K562 (cell line): ENCODE measurements at regions of chr7 and their contacts with region 1.

Region 1: DNA sequence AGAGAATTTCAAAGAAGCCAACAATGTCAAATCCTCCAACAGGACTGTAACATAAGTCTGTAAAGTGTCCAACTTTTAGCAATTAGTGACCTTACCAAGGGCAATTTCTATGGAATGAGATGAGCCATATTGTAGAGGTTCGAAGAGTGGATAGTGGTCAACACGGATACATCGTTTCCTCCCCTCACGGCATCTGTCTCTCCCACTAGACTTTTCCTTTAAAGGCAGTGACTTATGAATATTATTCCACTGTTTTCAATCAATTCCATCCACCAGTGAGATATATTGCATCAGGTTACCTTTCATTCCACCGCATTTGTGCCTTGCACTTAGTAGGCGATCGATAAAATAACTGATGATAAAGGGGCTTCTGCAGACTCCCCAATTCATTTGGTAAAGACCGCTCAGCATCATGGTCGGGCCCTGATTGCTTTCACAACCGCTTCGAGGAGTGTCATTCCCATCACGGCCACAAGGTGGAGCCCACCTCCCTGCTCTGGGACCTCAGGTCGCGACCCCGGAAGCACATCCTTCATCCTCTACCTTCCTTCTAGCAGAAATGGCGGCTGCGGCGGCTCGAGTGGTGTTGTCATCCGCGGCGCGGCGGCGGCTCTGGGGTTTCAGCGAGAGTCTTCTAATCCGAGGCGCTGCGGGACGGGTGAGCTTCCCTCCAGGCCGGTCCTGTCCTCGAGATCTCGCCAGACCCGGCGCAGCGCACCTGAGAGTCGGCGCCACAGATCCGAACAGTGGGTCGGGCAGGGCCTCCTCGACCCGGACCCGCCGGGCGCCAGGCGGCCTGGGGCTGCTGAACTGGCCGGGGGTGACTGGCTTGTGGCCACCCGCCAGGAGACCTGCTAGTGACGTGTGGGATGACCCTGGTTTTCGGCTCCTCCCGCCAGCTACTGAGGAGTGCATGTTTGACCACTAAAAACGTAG is at the start of gene PMPCB:
- DNase-seq: peak; percentile 95 to 97 (median 96)
- ATAC-seq: peak; percentile 93
- H3K4me3 ChIP-seq: peak within 1 kb of the TSS; percentile 69
- H3K27ac ChIP-seq: peak within 1 kb of the TSS; percentile 80
- H3K4me1 ChIP-seq: peaks cover 3 to 6% of the 10 kb centered on the region in 2 experiments; a peak in 4 of 5 replicates
- H3K27me3 ChIP-seq: no peaks in the 10 kb centered on the region
- CTCF ChIP-seq: peak; percentile 92 to 98 (median 98)
- EP300 ChIP-seq: peak; percentile 19; the same call in 1 of the 2 replicates
- POLR2A ChIP-seq: peak; percentile 96
- RAD21 ChIP-seq: peak; percentile 88 to 91
- polyA plus RNA-seq, gene PMPCB: 169 to 209 TPM

Region 2: DNA sequence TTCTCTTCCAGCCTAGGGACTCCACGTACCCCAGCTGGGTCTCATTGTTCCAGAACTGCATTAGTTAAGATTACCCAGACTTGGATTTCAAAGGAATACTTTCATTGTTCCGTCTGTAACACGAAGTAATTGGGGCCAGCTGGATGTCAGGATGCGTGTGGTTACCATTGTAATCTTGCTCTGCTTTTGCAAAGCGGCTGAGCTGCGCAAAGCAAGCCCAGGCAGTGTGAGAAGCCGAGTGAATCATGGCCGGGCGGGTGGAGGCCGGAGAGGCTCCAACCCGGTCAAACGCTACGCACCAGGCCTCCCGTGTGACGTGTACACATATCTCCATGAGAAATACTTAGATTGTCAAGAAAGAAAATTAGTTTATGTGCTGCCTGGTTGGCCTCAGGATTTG is 363.4 kb before region 1 on chr7:
- CTCF ChIA-PET with region 1: no interaction called
- POLR2A ChIA-PET with region 1: no interaction called
- in situ Hi-C with region 1: no loop called
- intact Hi-C with region 1: no loop called
- DNase-seq: no peak
- ATAC-seq: no peak
- H3K4me3 ChIP-seq: no peak overlapping the region
- H3K27ac ChIP-seq: no peak overlapping the region
- H3K4me1 ChIP-seq: peaks cover 4 to 16% of the 10 kb centered on the region in 2 experiments
- H3K27me3 ChIP-seq: no peaks in the 10 kb centered on the region
- CTCF ChIP-seq: no peak
- EP300 ChIP-seq: no peak
- POLR2A ChIP-seq: no peak
- RAD21 ChIP-seq: no peak

Region 3: GRCh38 chr7:103344453-103345149 is 47.4 kb after region 1 on chr7 and contains the start of gene DNAJC2:
- CTCF ChIA-PET with region 1: interaction called, 3 read pairs
- POLR2A ChIA-PET with region 1: interaction called, 3 read pairs
- in situ Hi-C with region 1: no loop called
- intact Hi-C with region 1: loop called (anchors 5 kb)
- DNase-seq: peak; percentile 88 to 98 (median 92)
- ATAC-seq: peak; percentile 89
- H3K4me3 ChIP-seq: peak within 1 kb of the TSS; percentile 82
- H3K27ac ChIP-seq: peak within 1 kb of the TSS; percentile 93
- H3K4me1 ChIP-seq: peaks cover 7 to 11% of the 10 kb centered on the region in 2 experiments; a peak in 3 of 5 replicates
- H3K27me3 ChIP-seq: no peaks in the 10 kb centered on the region
- CTCF ChIP-seq: no peak
- EP300 ChIP-seq: peak; percentile 73
- POLR2A ChIP-seq: peak; percentile 95
- RAD21 ChIP-seq: no peak
- polyA plus RNA-seq, gene DNAJC2: 40.2 to 40.4 TPM

Region 4: DNA sequence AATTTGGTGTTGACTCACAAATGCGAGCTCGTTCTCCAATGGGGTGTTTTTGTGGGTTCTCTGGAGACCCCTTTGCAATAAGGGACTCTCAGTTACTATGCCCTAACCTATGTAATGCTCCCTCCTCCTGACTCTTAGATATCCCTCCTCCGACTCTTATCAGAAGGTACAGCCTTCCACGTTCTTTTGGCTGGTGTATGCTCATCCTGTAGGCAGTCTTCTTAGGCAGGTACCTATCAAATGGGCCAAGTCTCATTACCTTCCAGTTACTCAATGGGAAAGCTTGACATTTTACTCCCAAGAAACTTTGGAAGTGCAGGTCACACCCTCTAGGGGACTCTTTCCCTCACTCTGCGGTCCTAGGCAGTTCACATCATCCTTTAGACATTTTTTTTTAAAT is 116.2 kb after region 1 on chr7:
- CTCF ChIA-PET with region 1: no interaction called
- POLR2A ChIA-PET with region 1: interaction called, 3 read pairs
- in situ Hi-C with region 1: loop called (anchors 5 kb)
- intact Hi-C with region 1: no loop called
- DNase-seq: peak in 2 of 4 experiments; percentile 32 to 35
- ATAC-seq: peak; percentile 88
- H3K4me3 ChIP-seq: no peak overlapping the region
- H3K27ac ChIP-seq: no peak overlapping the region
- H3K4me1 ChIP-seq: no peaks in the 10 kb centered on the region; a peak in 1 of 5 replicates
- H3K27me3 ChIP-seq: no peaks in the 10 kb centered on the region
- CTCF ChIP-seq: no peak
- EP300 ChIP-seq: no peak
- POLR2A ChIP-seq: no peak
- RAD21 ChIP-seq: no peak